Activated naive CD4-positive, alpha-beta T cell treated with anti-CD3 and anti-CD28 coated beads, Interleukin-2, amount 10 ng/mL, durations not matched to agents 7 days and 5 days (primary cell): ENCODE measurements at regions of chr1 and their contacts with region 1.

Region 1: DNA sequence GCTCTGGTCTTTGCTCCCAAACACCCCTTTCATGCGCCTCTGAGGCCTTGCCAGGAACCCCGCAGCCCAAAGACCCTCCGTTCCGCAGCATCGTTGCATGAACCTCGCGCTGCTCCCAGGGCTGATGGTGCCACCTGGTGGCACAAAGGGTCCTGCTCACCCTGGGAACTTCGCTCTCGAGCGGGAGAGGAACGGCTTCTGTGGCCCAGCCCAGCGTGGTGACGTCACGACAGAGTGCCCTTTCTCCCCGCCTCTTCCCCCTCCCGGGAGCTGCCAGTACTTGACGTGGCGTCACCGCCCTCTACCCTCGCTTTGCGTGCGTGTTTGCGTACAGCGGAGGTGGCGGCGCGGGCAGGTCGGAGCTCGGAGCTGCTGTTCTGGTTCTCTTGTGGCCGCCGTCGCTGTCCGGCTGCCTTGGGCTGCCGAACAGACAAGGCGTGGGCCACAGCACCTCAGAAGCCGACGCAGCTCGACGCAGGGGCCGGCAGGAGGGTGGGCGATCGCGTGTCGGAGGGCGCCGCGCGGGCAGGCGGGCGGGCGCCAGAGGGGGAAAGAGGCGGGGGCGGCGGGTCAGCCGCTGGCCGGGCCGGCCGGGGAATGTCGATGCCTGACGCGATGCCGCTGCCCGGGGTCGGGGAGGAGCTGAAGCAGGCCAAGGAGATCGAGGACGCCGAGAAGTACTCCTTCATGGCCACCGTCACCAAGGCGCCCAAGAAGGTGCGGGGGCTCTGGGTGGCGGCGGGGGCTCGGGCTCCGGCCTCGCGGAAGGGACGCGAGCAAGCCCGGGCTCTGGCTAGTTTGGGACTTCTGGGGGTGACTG is at the start of gene AHCYL1:
- DNase-seq: peak; percentile 100
- H3K4me3 Mint-ChIP-seq: peak within 1 kb of the TSS; percentile 90
- H3K27ac Mint-ChIP-seq: peak within 1 kb of the TSS; percentile 93
- H3K4me1 Mint-ChIP-seq: peaks cover 32% of the 10 kb centered on the region
- H3K27me3 Mint-ChIP-seq: peaks cover 19% of the 10 kb centered on the region

Region 2: DNA sequence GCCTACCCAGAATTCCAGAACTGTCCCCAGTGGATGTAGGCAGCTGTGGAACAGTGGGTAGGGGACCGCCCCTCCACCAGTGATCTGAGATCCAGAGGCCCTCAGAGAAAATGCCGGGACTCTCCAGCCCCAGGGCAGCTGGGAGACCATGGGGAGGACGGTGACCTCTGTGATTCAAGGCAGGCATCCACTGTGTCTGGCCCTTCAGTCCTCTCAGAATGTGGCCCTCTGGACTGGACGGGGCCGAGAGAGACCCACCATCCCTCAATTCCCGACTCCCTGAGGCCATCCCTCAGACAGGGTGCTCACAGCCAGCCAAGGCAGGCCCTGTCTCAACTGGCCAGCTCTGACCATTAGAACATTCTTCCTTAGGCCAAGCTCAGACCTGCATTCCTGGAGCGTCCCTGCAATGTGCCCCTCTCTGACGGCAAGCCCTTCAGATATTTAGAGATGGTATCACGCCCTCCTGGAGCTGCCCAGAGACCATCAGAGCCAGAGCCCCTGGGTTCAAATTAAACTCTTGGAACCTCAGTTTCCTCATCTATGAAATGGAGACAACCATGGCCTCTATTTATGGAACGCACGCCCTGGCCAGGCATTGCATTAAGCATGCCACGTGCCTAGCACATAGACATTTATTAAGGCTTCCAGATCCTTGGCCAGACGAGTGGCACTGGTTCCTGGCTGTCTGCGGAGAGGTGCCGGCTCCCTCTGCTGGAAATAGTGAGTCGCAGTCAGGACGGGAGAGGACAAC is 211.3 kb before region 1 on chr1:
- CTCF ChIA-PET with region 1: interaction called, 613 read pairs
- DNase-seq: peak; percentile 82
- H3K4me3 Mint-ChIP-seq: no peak overlapping the region
- H3K27ac Mint-ChIP-seq: no peak overlapping the region
- H3K4me1 Mint-ChIP-seq: peaks cover 11% of the 10 kb centered on the region
- H3K27me3 Mint-ChIP-seq: peaks cover 52% of the 10 kb centered on the region

Region 3: DNA sequence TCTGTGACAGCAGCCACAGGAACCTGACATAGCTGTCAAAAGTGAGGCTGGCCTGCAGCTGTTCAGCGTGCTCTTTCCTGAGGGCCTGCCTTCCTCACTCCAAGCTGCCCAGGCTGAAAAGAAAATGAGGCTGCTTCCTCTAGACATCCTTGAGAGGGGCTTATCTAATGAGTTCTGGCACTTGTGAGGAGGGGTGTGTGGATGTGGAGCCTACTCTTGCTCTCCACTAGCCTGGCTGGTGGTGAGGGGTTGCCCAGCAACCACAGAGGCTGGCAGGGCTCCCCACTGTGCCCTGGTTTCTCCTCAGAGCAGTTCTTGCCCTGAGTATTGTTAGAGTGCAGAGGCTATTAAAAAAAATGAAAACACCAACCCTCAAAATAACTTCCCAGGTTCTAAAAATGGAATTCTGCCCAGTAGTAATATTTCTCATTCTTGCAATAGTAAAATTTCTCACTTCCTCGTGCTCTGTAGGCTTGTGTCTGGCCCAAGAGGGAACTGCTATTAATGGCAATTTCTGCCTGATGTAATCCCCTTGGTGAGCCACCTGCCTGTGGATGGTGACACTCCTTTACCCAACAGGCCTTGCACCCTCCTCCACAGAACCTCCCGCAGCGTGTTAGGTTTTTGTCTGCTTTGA is 168.4 kb before region 1 on chr1:
- CTCF ChIA-PET with region 1: interaction called, 11 read pairs
- DNase-seq: no peak
- H3K4me3 Mint-ChIP-seq: no peak overlapping the region
- H3K27ac Mint-ChIP-seq: no peak overlapping the region
- H3K4me1 Mint-ChIP-seq: peaks cover 11% of the 10 kb centered on the region
- H3K27me3 Mint-ChIP-seq: peaks cover 28% of the 10 kb centered on the region

Region 4: GRCh38 chr1:109864047-109864822 is 120.4 kb before region 1 on chr1:
- CTCF ChIA-PET with region 1: no interaction called
- DNase-seq: no peak
- H3K4me3 Mint-ChIP-seq: no peak overlapping the region
- H3K27ac Mint-ChIP-seq: no peak overlapping the region
- H3K4me1 Mint-ChIP-seq: peaks cover 5% of the 10 kb centered on the region
- H3K27me3 Mint-ChIP-seq: peaks cover 19% of the 10 kb centered on the region

Region 5: GRCh38 chr1:109971559-109971958 is 13.1 kb before region 1 on chr1:
- CTCF ChIA-PET with region 1: interaction called, 13 read pairs
- DNase-seq: no peak
- H3K4me3 Mint-ChIP-seq: no peak overlapping the region
- H3K27ac Mint-ChIP-seq: no peak overlapping the region
- H3K4me1 Mint-ChIP-seq: no peaks in the 10 kb centered on the region
- H3K27me3 Mint-ChIP-seq: peaks cover 28% of the 10 kb centered on the region

Region 6: GRCh38 chr1:110011527-110012041 is 26.9 kb after region 1 on chr1:
- CTCF ChIA-PET with region 1: interaction called, 56 read pairs
- DNase-seq: peak; percentile 63
- H3K4me3 Mint-ChIP-seq: no peak overlapping the region
- H3K27ac Mint-ChIP-seq: peak overlapping the region; percentile 43
- H3K4me1 Mint-ChIP-seq: peaks cover 3% of the 10 kb centered on the region
- H3K27me3 Mint-ChIP-seq: no peaks in the 10 kb centered on the region